ENCODE measurements at regions of chr16 and their contacts with region 1.

Region 1: GRCh38 chr16:12803203-12804097 is at the start of gene CPPED1:
- DNase-seq: peak; percentile 90
- H3K4me3 Mint-ChIP-seq: peak within 1 kb of the TSS; percentile 95
- H3K27ac Mint-ChIP-seq: peak within 1 kb of the TSS; percentile 81
- H3K4me1 Mint-ChIP-seq: peaks cover 53% of the 10 kb centered on the region
- H3K27me3 Mint-ChIP-seq: no peaks in the 10 kb centered on the region
- total RNA-seq, gene CPPED1: 26.1 to 27.0 TPM

Region 2: GRCh38 chr16:12535535-12536411 is 267.7 kb before region 1 on chr16:
- CTCF ChIA-PET with region 1: no interaction called
- POLR2A ChIA-PET with region 1: interaction called, 36 read pairs
- DNase-seq: peak; percentile 72
- H3K4me3 Mint-ChIP-seq: peak overlapping the region; percentile 63
- H3K27ac Mint-ChIP-seq: peak overlapping the region; percentile 95
- H3K4me1 Mint-ChIP-seq: peaks cover 98% of the 10 kb centered on the region
- H3K27me3 Mint-ChIP-seq: no peaks in the 10 kb centered on the region

Region 3: GRCh38 chr16:12750554-12750918 is 52.9 kb before region 1 on chr16:
- CTCF ChIA-PET with region 1: no interaction called
- POLR2A ChIA-PET with region 1: interaction called, 16 read pairs
- DNase-seq: peak; percentile 47
- H3K4me3 Mint-ChIP-seq: peak overlapping the region; percentile 26
- H3K27ac Mint-ChIP-seq: peak overlapping the region; percentile 80
- H3K4me1 Mint-ChIP-seq: peaks cover 45% of the 10 kb centered on the region
- H3K27me3 Mint-ChIP-seq: no peaks in the 10 kb centered on the region

Region 4: GRCh38 chr16:12781777-12782176 is 21.7 kb before region 1 on chr16:
- CTCF ChIA-PET with region 1: no interaction called
- POLR2A ChIA-PET with region 1: interaction called, 44 read pairs
- DNase-seq: peak; percentile 64
- H3K4me3 Mint-ChIP-seq: peak overlapping the region; percentile 38
- H3K27ac Mint-ChIP-seq: peak overlapping the region; percentile 84
- H3K4me1 Mint-ChIP-seq: peaks cover 30% of the 10 kb centered on the region
- H3K27me3 Mint-ChIP-seq: no peaks in the 10 kb centered on the region

Region 5: GRCh38 chr16:13291591-13292333 is 488.3 kb after region 1 on chr16:
- CTCF ChIA-PET with region 1: no interaction called
- POLR2A ChIA-PET with region 1: no interaction called
- DNase-seq: no peak
- H3K4me3 Mint-ChIP-seq: no peak overlapping the region
- H3K27ac Mint-ChIP-seq: no peak overlapping the region
- H3K4me1 Mint-ChIP-seq: no peaks in the 10 kb centered on the region
- H3K27me3 Mint-ChIP-seq: no peaks in the 10 kb centered on the region

Measured in activated CD4-positive, alpha-beta memory T cell treated with anti-CD3 and anti-CD28 coated beads, Interleukin-2, amount 10 ng/mL, durations not matched to agents 7 days and 5 days (primary cell).